ENCODE measurements at regions of chr17 and their contacts with region 1.

Region 1: GRCh38 chr17:2244545-2245525 is 58.8 kb downstream of the SMG6 start:
- DNase-seq: peak; percentile 89
- ATAC-seq: peak; percentile 98
- H3K4me3 Mint-ChIP-seq: no peak overlapping the region
- H3K27ac Mint-ChIP-seq: no peak overlapping the region
- H3K4me1 Mint-ChIP-seq: no peaks in the 10 kb centered on the region
- H3K27me3 Mint-ChIP-seq: no peaks in the 10 kb centered on the region
- CTCF ChIP-seq: peak; percentile 94

Region 2: DNA sequence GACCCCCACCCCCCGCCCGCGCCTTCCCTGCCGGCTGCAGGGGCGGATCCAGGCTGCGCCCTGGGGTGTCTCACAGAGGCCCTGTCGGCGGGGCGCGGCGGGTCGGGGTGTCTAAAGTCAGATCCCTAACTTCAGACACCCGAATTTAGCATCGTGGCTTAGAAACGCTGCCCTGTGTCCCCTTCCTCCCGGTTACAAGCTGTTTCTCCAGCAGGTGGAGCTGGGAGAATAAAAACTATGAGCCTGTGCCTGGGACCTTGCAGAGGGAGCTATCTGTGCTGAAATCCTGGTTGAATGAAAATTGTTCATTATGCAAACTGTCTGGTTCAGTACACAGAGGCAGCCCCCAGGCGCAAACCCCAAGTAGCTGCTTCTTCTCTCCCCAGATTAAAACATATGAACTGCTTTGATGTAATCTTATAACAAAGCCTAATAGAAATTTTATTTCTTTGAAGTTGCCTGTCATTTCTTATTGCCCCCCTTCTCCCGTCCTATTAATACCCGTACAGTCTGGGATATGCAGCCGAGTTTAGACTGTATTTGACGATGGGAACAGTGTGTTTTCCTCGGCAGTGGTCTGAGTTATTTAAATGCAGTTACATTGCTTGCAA is 336.0 kb before region 1 on chr17:
- CTCF ChIA-PET with region 1: interaction called, 11 read pairs
- POLR2A ChIA-PET with region 1: no interaction called
- DNase-seq: peak; percentile 69
- ATAC-seq: peak; percentile 87
- H3K4me3 Mint-ChIP-seq: peak overlapping the region; percentile 63
- H3K27ac Mint-ChIP-seq: no peak overlapping the region
- H3K4me1 Mint-ChIP-seq: peaks cover 2% of the 10 kb centered on the region
- H3K27me3 Mint-ChIP-seq: peaks cover 98% of the 10 kb centered on the region
- CTCF ChIP-seq: peak; percentile 40; the same call in 1 of the 2 replicates

Region 3: GRCh38 chr17:2070241-2071023 is 174.4 kb before region 1 on chr17:
- CTCF ChIA-PET with region 1: interaction called, 30 read pairs
- POLR2A ChIA-PET with region 1: no interaction called
- DNase-seq: peak; percentile 58
- ATAC-seq: peak; percentile 84
- H3K4me3 Mint-ChIP-seq: no peak overlapping the region
- H3K27ac Mint-ChIP-seq: peak overlapping the region; percentile 75
- H3K4me1 Mint-ChIP-seq: peaks cover 12% of the 10 kb centered on the region
- H3K27me3 Mint-ChIP-seq: no peaks in the 10 kb centered on the region
- CTCF ChIP-seq: no peak

Region 4: GRCh38 chr17:2111719-2112118 is 133.1 kb before region 1 on chr17:
- CTCF ChIA-PET with region 1: interaction called, 13 read pairs
- POLR2A ChIA-PET with region 1: no interaction called
- DNase-seq: no peak
- ATAC-seq: no peak
- H3K4me3 Mint-ChIP-seq: no peak overlapping the region
- H3K27ac Mint-ChIP-seq: peak overlapping the region; percentile 26; the same call in 1 of the 2 replicates
- H3K4me1 Mint-ChIP-seq: peaks cover 5% of the 10 kb centered on the region
- H3K27me3 Mint-ChIP-seq: no peaks in the 10 kb centered on the region
- CTCF ChIP-seq: no peak

Region 5: GRCh38 chr17:2179615-2180295 is 65.1 kb before region 1 on chr17:
- CTCF ChIA-PET with region 1: interaction called, 19 read pairs
- POLR2A ChIA-PET with region 1: no interaction called
- DNase-seq: no peak
- ATAC-seq: no peak
- H3K4me3 Mint-ChIP-seq: no peak overlapping the region
- H3K27ac Mint-ChIP-seq: peak overlapping the region; percentile 48; the same call in 1 of the 2 replicates
- H3K4me1 Mint-ChIP-seq: peaks cover 18% of the 10 kb centered on the region
- H3K27me3 Mint-ChIP-seq: no peaks in the 10 kb centered on the region
- CTCF ChIP-seq: no peak

Region 6: DNA sequence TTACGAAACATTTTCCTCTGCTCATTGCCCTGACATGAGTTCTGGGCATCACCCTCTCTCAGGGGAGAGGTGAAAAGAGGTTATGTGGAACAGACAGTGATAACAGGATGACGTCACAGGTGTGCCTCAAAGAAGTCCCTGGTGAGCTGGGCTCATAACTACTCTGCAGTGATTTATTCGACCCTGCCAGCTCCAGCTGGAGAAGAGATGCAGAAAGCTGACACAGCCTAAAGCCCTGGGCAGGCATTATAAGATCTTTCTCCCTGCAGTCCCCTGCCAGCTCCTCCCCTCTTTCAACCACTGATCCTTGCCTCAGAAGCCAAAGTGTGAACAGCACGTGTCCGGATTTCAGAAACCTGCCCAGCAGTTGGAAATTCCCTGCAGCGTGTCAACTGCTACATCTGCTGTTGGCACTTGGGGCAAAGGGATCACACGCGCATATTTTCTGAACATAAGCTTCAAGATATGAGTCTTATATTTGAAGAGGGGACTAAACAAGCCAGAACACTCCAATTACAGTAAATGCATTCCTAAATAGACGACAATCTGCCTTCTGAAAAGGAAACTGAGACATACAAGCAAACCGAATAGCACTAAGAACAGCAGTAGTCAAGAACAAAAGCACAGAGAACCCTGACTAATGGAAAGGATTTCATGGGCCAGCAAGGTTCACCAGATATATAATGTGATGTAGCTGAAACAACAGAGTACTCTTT is 21.8 kb before region 1 on chr17:
- CTCF ChIA-PET with region 1: interaction called, 11 read pairs
- POLR2A ChIA-PET with region 1: no interaction called
- DNase-seq: no peak
- ATAC-seq: no peak
- H3K4me3 Mint-ChIP-seq: no peak overlapping the region
- H3K27ac Mint-ChIP-seq: no peak overlapping the region
- H3K4me1 Mint-ChIP-seq: peaks cover 5% of the 10 kb centered on the region
- H3K27me3 Mint-ChIP-seq: no peaks in the 10 kb centered on the region
- CTCF ChIP-seq: no peak

Region 7: GRCh38 chr17:2271985-2272702 is 27.3 kb after region 1 on chr17:
- CTCF ChIA-PET with region 1: interaction called, 12 read pairs
- POLR2A ChIA-PET with region 1: no interaction called
- DNase-seq: no peak
- ATAC-seq: no peak
- H3K4me3 Mint-ChIP-seq: no peak overlapping the region
- H3K27ac Mint-ChIP-seq: peak overlapping the region; percentile 12; the same call in 1 of the 2 replicates
- H3K4me1 Mint-ChIP-seq: no peaks in the 10 kb centered on the region
- H3K27me3 Mint-ChIP-seq: no peaks in the 10 kb centered on the region
- CTCF ChIP-seq: no peak

Measured in WTC11 (cell line).